Colonic mucosa (tissue), 4 donors: ENCODE measurements at regions of chr9 and their contacts with region 1.

Region 1: GRCh38 chr9:107239474-107239873 is 43.6 kb upstream of the RAD23B start:
- DNase-seq: no peak
- H3K4me3 ChIP-seq: no peak overlapping the region
- H3K27ac ChIP-seq: no peak overlapping the region
- H3K4me1 ChIP-seq: no peaks in the 10 kb centered on the region
- H3K27me3 ChIP-seq: no peaks in the 10 kb centered on the region
- CTCF ChIP-seq: peak; percentile 19

Region 2: DNA sequence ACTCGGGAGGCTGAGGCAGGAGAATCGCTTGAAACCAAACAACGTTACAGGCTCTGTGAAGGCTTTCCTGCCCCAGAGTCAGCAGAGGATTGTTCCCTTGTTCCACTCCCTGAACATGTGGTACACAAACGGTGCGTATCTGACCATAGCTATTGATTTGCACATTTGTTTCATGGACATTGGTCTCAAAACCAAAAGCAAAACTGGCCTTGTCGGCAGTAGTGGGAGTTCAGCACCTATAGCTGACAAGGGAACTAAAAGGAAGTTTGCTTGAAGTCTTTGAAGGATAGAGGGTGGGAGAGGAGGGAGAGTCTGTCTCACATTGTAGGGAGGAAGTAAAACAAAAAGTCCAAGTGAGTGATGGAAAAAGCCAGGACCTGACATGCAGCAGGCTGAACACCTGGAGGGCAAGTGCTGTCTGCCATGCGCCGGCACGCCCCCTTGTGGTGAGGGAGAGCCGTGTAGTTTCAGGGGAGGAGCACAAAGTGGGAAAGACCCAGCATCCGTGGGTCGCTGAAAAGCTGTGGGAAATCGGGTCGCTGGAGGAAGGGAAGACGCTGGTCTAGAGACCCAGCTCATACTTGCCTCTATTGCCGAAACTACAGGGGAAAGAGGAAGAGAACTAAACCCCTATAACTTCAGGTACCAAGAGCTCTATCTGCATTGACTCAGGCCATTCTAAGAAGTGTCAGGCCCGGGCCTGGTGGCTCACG is 101.6 kb after region 1 on chr9:
- intact Hi-C with region 1: loop called (anchors 5 kb)
- DNase-seq: peak; percentile 83
- H3K4me3 ChIP-seq: no peak overlapping the region
- H3K27ac ChIP-seq: no peak overlapping the region
- H3K4me1 ChIP-seq: no peaks in the 10 kb centered on the region
- H3K27me3 ChIP-seq: no peaks in the 10 kb centered on the region
- CTCF ChIP-seq: peak; percentile 90